ENCODE measurements at regions of chr12 and their contacts with region 1.

Region 1: GRCh38 chr12:113221181-113221997 is at the start of gene TPCN1:
- DNase-seq: peak; percentile 99
- H3K4me3 Mint-ChIP-seq: peak within 1 kb of the TSS; percentile 91
- H3K27ac Mint-ChIP-seq: peak within 1 kb of the TSS; percentile 92
- H3K4me1 Mint-ChIP-seq: peaks cover 33% of the 10 kb centered on the region
- H3K27me3 Mint-ChIP-seq: peaks cover under 1% of the 10 kb centered on the region
- total RNA-seq, gene TPCN1: 31.4 and 35.4 TPM in 2 replicates

Region 2: DNA sequence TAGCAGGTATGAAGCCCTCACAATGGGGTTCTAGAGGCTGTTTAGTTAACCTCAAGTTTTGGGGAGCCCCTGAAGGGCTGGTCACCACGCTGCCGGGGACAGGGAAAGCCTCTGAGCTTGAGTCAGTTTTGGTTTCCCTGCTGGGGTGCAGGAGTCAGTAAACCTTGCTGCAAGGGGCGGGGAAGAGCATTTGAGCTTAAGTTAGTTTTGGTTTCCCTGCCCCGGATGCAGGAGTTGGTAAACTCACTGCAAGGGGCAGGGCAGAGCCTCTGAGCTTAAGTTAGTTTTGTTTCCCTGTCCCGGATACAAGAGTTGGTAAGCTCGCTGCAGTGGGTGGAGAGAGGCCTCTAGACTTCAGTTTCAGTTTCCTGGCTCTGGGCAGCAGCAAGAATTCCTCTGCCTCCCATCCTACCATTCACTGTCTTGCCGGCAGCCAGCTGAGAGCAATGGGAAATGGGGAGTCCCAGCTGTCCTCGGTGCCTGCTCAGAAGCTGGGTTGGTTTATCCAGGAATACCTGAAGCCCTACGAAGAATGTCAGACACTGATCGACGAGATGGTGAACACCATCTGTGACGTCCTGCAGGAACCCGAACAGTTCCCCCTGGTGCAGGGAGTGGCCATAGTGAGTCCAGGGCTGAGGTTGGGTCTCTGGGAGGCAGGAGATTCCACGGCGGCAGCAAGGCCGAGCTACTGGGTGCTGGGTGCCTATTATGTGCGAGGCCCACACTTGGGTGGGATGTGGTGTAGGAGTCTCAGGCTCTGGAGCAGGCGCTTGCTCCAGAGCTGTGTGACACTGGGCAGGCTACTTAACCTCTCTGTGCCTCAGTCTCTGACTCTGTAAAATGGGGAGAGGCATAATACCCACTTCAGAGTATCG is 243.0 kb before region 1 on chr12 and contains the start of gene OAS2:
- intact Hi-C with region 1: loop called (anchors 1 kb)
- DNase-seq: peak; percentile 85
- H3K4me3 Mint-ChIP-seq: peak within 1 kb of the TSS; percentile 94
- H3K27ac Mint-ChIP-seq: peak within 1 kb of the TSS; percentile 99
- H3K4me1 Mint-ChIP-seq: peaks cover 56% of the 10 kb centered on the region
- H3K27me3 Mint-ChIP-seq: no peaks in the 10 kb centered on the region
- total RNA-seq, gene OAS2: 113 and 119 TPM in 2 replicates

Region 3: GRCh38 chr12:113103756-113104450 is 117.5 kb before region 1 on chr12:
- intact Hi-C with region 1: no loop called
- DNase-seq: peak; percentile 37
- H3K4me3 Mint-ChIP-seq: peak overlapping the region; percentile 45
- H3K27ac Mint-ChIP-seq: no peak overlapping the region
- H3K4me1 Mint-ChIP-seq: no peaks in the 10 kb centered on the region
- H3K27me3 Mint-ChIP-seq: peaks cover 6% of the 10 kb centered on the region

Region 4: GRCh38 chr12:113196996-113197395 is 24.4 kb before region 1 on chr12:
- intact Hi-C with region 1: loop called (anchors 1 kb)
- DNase-seq: peak; percentile 55
- H3K4me3 Mint-ChIP-seq: no peak overlapping the region
- H3K27ac Mint-ChIP-seq: no peak overlapping the region
- H3K4me1 Mint-ChIP-seq: peaks cover 11% of the 10 kb centered on the region
- H3K27me3 Mint-ChIP-seq: no peaks in the 10 kb centered on the region

Region 5: GRCh38 chr12:113232840-113233585 is 11.6 kb after region 1 on chr12:
- intact Hi-C with region 1: loop called (anchors 1 kb)
- DNase-seq: peak; percentile 47
- H3K4me3 Mint-ChIP-seq: peak overlapping the region; percentile 79
- H3K27ac Mint-ChIP-seq: peak overlapping the region; percentile 88
- H3K4me1 Mint-ChIP-seq: peaks cover 61% of the 10 kb centered on the region
- H3K27me3 Mint-ChIP-seq: no peaks in the 10 kb centered on the region

Region 6: DNA sequence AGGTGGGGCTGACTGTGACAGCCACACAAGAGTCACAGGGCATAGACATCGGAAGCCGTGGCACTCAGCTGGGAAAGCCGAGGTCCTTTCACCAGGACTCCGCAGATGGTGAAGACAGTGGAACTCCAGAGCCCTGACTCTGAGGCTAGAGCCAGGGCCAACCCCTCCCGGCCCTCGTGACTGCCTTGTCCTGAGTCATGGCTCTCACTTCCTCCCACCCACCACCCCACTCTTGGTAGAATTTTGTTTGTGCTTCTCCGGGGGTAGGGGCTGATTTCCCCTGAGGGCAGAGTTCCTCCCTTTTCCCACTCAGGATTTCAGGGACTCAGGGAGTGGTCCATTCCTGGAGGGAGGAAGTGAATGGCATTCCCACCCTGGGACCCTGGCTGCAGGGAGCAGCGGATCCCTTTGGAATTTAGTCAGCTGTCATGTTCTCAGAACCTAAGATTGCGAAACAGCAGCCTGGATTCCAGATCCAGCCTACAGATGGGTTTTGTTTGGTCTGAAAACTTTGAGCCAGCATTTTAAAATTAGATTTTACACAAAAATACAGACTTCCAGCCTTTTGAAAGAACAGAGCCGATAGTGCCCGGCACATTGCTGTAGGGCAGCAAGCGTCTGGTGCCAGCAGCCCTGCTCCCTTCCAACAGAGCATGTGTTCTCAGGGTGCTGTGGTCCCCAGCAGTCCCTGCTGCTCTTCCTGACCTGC is 50.6 kb after region 1 on chr12:
- intact Hi-C with region 1: no loop called
- DNase-seq: no peak
- H3K4me3 Mint-ChIP-seq: no peak overlapping the region
- H3K27ac Mint-ChIP-seq: no peak overlapping the region
- H3K4me1 Mint-ChIP-seq: peaks cover 15% of the 10 kb centered on the region
- H3K27me3 Mint-ChIP-seq: no peaks in the 10 kb centered on the region

Region 7: GRCh38 chr12:113334786-113335540 is 113.6 kb after region 1 on chr12 and contains the start of gene SLC8B1:
- intact Hi-C with region 1: loop called (anchors 1 kb)
- DNase-seq: peak; percentile 79
- H3K4me3 Mint-ChIP-seq: peak within 1 kb of the TSS; percentile 93
- H3K27ac Mint-ChIP-seq: peak within 1 kb of the TSS; percentile 68
- H3K4me1 Mint-ChIP-seq: peaks cover 12% of the 10 kb centered on the region
- H3K27me3 Mint-ChIP-seq: peaks cover 5% of the 10 kb centered on the region
- total RNA-seq, gene SLC8B1: 21.2 TPM in 2 replicates

Region 8: DNA sequence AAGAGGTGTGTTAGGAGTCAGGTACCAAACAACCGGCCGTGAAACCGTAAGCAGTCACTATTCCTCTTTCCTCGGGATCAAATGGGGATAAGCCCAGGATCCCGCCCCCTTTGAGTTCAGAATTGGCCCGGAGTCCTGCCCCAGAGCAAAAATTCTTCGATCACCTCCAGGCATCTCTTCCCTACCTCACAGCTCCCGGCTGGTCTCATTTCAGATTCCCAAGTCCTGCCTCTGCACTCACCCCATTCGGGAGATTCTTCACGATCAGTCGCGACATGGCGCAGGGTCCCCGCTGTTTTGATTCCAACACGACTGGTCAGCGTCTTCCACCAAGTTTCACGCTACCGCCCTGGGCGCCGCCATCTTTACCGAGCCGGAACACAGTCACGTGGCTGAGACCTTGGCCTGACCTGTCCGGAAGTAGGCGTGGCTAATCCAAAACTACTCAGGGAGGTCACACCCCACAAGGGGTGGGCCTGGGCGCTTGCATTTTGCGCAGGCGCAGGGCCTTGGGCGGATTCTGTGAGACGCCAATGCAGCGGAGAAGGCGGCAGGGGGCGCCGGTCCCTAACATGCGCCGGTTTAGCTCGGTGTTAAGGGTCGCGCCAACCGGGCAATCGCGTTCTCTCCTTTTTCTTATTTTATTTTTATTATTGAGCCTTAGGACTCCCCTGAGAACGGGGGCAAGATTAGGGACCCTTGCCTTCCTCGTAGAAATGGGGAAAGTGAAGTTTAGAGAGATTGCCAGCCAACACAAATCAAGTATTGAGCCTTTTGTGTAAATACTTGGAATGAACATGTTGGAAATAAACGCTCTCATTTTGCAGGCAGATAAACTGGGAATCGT is 744.8 kb after region 1 on chr12 and contains the start of gene RBM19:
- intact Hi-C with region 1: loop called (anchors 1 kb)
- DNase-seq: peak; percentile 97
- H3K4me3 Mint-ChIP-seq: peak within 1 kb of the TSS; percentile 99
- H3K27ac Mint-ChIP-seq: peak within 1 kb of the TSS; percentile 99
- H3K4me1 Mint-ChIP-seq: peaks cover 60% of the 10 kb centered on the region
- H3K27me3 Mint-ChIP-seq: peaks cover 3% of the 10 kb centered on the region
- total RNA-seq, gene RBM19: 102 TPM in 2 replicates

Region 9: DNA sequence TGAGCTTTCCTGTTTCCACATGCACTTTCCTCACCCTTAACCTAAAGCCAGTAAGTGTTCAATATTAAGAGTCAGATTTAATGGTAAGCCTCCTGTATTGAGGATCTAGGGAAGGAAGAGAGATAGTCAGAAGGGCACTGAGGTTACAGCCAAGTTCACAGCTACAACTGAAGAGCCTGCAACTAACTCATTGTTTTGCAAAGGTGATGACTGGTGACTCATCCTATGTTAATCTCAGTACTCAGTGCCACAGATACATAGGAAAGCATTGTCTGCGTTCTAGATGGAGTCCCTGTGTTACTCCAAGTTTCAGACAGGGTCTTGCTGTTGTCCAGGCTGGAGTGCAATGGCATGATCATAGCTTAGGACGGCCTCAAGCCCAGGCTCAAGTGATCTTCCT is 901.7 kb after region 1 on chr12:
- intact Hi-C with region 1: no loop called
- DNase-seq: no peak
- H3K4me3 Mint-ChIP-seq: no peak overlapping the region
- H3K27ac Mint-ChIP-seq: no peak overlapping the region
- H3K4me1 Mint-ChIP-seq: no peaks in the 10 kb centered on the region
- H3K27me3 Mint-ChIP-seq: no peaks in the 10 kb centered on the region

Measured in activated T-helper 1 cell treated with anti-CD3 and anti-CD28 coated beads, Interleukin-12 subunit alpha, Interleukin-12 subunit beta, Interleukin-2, Interleukin-4 antibody, amounts not matched to agents 30 ng/mL and 10 ng/mL and 1 ng/mL, durations not matched to agents 14 hours and 24 hours and 36 hours (primary cell).